Calu3 (cell line): ENCODE measurements at regions of chr12 and their contacts with region 1.

Region 1: DNA sequence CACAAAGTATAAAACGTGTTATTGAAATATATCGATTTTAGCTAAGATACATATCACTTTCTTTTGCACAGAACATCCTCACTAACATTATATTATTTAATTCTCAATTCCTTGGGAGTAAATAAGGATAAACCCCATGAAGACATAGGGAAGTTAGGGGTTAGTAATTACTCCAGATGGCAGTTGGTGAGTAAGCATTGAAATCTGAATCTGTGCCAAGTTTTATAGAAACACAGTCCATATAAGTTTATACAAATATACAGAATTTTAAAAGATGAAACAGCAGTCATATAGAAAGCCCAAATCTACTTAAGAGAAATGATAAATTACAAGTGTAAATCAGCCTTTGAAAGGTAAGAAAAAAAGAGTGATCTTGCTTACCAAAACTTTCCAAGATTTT is 200.4 kb upstream of the SYT10 start:
- DNase-seq: no peak
- H3K4me3 Mint-ChIP-seq: no peak overlapping the region
- H3K27ac Mint-ChIP-seq: no peak overlapping the region
- H3K4me1 Mint-ChIP-seq: no peaks in the 10 kb centered on the region
- H3K27me3 Mint-ChIP-seq: no peaks in the 10 kb centered on the region
- CTCF ChIP-seq: no peak

Region 2: DNA sequence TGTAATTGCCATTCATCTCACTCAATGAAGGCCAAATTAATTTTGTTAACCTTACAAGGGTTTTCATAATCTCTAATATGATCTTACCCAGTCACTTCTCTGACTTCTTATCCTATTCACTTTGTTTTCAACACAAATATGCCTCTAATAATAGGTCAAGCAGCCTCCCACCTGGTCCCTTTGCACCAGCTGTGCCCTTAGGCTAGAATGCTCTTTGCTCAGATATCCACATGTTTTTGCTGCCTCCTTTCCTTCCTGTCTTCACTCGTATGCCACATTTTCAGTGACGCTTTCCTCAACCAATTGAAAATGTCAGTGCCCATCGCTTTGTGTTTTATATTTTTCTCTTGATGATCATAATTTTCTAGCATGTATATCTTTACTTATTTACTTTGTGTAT is 94.0 kb before region 1 on chr12:
- CTCF ChIA-PET with region 1: no interaction called
- intact Hi-C with region 1: no loop called
- DNase-seq: no peak
- H3K4me3 Mint-ChIP-seq: no peak overlapping the region
- H3K27ac Mint-ChIP-seq: no peak overlapping the region
- H3K4me1 Mint-ChIP-seq: peaks cover 8% of the 10 kb centered on the region
- H3K27me3 Mint-ChIP-seq: no peaks in the 10 kb centered on the region
- CTCF ChIP-seq: no peak

Region 3: DNA sequence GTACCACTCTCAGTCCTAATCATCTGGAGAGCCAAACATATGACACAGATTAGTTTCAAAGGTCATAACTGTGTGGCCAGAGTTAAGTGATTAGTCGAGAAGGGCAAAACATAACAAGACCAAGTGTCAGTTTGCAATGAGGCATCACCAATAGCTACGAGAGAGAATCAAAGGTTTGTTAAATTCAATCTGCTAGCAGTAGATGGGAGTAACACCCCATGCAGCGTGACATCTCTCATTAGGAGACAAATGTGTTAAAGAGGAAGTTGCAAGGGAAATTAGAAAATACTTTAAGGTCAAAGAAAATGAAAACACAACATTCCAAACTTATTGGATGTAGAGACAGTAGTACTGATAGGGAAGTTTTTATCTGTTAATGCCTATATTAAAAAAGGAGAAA is 64.6 kb before region 1 on chr12:
- CTCF ChIA-PET with region 1: no interaction called
- intact Hi-C with region 1: no loop called
- DNase-seq: no peak
- H3K4me3 Mint-ChIP-seq: no peak overlapping the region
- H3K27ac Mint-ChIP-seq: no peak overlapping the region
- H3K4me1 Mint-ChIP-seq: no peaks in the 10 kb centered on the region
- H3K27me3 Mint-ChIP-seq: no peaks in the 10 kb centered on the region
- CTCF ChIP-seq: no peak

Region 4: DNA sequence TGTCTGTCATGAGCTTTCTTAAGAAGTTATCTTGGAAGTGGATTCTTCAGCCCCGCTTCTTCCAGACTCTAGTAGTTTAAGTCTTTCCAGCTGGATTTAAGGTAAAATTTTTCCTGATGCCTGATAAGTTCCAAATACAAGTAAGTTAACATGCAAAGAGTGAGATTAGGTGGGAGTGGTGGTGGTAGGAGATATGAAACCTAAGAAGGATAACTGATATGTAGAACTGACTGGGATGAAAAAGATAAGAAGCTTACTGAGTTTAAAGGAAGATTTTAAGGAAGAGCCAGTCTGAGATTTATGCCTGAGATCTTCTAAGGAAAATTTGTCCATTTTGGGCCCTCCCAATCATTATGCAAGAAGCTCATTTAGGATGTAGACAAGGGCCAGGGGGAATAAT is 50.6 kb after region 1 on chr12:
- CTCF ChIA-PET with region 1: no interaction called
- intact Hi-C with region 1: loop called (anchors 10 kb)
- DNase-seq: no peak
- H3K4me3 Mint-ChIP-seq: no peak overlapping the region
- H3K27ac Mint-ChIP-seq: no peak overlapping the region
- H3K4me1 Mint-ChIP-seq: no peaks in the 10 kb centered on the region
- H3K27me3 Mint-ChIP-seq: no peaks in the 10 kb centered on the region
- CTCF ChIP-seq: no peak

Region 5: GRCh38 chr12:34163431-34163830 is 523.5 kb after region 1 on chr12:
- CTCF ChIA-PET with region 1: no interaction called
- intact Hi-C with region 1: no loop called
- DNase-seq: peak; percentile 3
- H3K4me3 Mint-ChIP-seq: no peak overlapping the region
- H3K27ac Mint-ChIP-seq: no peak overlapping the region
- H3K4me1 Mint-ChIP-seq: no peaks in the 10 kb centered on the region
- H3K27me3 Mint-ChIP-seq: no peaks in the 10 kb centered on the region
- CTCF ChIP-seq: no peak